CD8-positive, alpha-beta T cell (primary cell): ENCODE measurements at regions of chr9 and their contacts with region 1.

Region 1: GRCh38 chr9:33130508-33130911 is 36.6 kb downstream of the B4GALT1 start:
- DNase-seq: peak in 2 of 9 experiments; percentile 49 to 68
- ATAC-seq: peak; percentile 74
- H3K4me3 ChIP-seq: no peak overlapping the region
- H3K4me3 Mint-ChIP-seq: no peak overlapping the region
- H3K27ac ChIP-seq: peak overlapping the region in 1 of 2 experiments; percentile 83
- H3K27ac Mint-ChIP-seq: peak overlapping the region; percentile 89
- H3K4me1 ChIP-seq: peaks cover 16% of the 10 kb centered on the region
- H3K4me1 Mint-ChIP-seq: peaks cover 53% of the 10 kb centered on the region
- H3K27me3 ChIP-seq: no peaks in the 10 kb centered on the region
- H3K27me3 Mint-ChIP-seq: no peaks in the 10 kb centered on the region
- CTCF ChIP-seq: no peak

Region 2: GRCh38 chr9:33177639-33178038 is 47.1 kb after region 1 on chr9:
- CTCF ChIA-PET with region 1: no interaction called
- POLR2A ChIA-PET with region 1: no interaction called
- intact Hi-C with region 1: loop called in 1 of 2 experiments (anchors 5 kb)
- DNase-seq: no peak
- ATAC-seq: no peak
- H3K4me3 ChIP-seq: no peak overlapping the region
- H3K4me3 Mint-ChIP-seq: no peak overlapping the region
- H3K27ac ChIP-seq: no peak overlapping the region
- H3K27ac Mint-ChIP-seq: no peak overlapping the region
- H3K4me1 ChIP-seq: no peaks in the 10 kb centered on the region
- H3K4me1 Mint-ChIP-seq: peaks cover 2% of the 10 kb centered on the region
- H3K27me3 ChIP-seq: no peaks in the 10 kb centered on the region
- H3K27me3 Mint-ChIP-seq: peaks cover 3% of the 10 kb centered on the region
- CTCF ChIP-seq: no peak